ENCODE measurements at regions of chr1 and their contacts with region 1.

Region 1: GRCh38 chr1:25487628-25488027 is 55.8 kb upstream of the LDLRAP1 start:
- DNase-seq: no peak

Region 2: GRCh38 chr1:24513706-24514105 is 973.9 kb before region 1 on chr1:
- intact Hi-C with region 1: loop called in 1 of 2 experiments (anchors 10 kb)
- DNase-seq: no peak